ENCODE measurements at regions of chr1 and their contacts with region 1.

Region 1: GRCh38 chr1:75053207-75053606 is 81.0 kb upstream of the LHX8 start:
- DNase-seq: no peak
- ATAC-seq: peak; percentile 95
- H3K4me3 Mint-ChIP-seq: no peak overlapping the region
- H3K27ac Mint-ChIP-seq: no peak overlapping the region
- H3K4me1 Mint-ChIP-seq: no peaks in the 10 kb centered on the region
- H3K27me3 Mint-ChIP-seq: no peaks in the 10 kb centered on the region
- CTCF ChIP-seq: 0 out of 2 replicates have a peak, but pooled peaks have one; percentile 15

Region 2: GRCh38 chr1:75115654-75116053 is 62.4 kb after region 1 on chr1:
- CTCF ChIA-PET with region 1: no interaction called
- POLR2A ChIA-PET with region 1: no interaction called
- DNase-seq: no peak
- ATAC-seq: no peak
- H3K4me3 Mint-ChIP-seq: no peak overlapping the region
- H3K27ac Mint-ChIP-seq: no peak overlapping the region
- H3K4me1 Mint-ChIP-seq: peaks cover 9% of the 10 kb centered on the region
- H3K27me3 Mint-ChIP-seq: peaks cover 2% of the 10 kb centered on the region; the same call in 1 of the 2 replicates
- CTCF ChIP-seq: no peak

Region 3: GRCh38 chr1:75203415-75204277 is 150.4 kb after region 1 on chr1:
- CTCF ChIA-PET with region 1: interaction called, 25 read pairs
- POLR2A ChIA-PET with region 1: no interaction called
- DNase-seq: peak; percentile 14
- ATAC-seq: peak; percentile 89
- H3K4me3 Mint-ChIP-seq: no peak overlapping the region
- H3K27ac Mint-ChIP-seq: no peak overlapping the region
- H3K4me1 Mint-ChIP-seq: peaks cover 14% of the 10 kb centered on the region
- H3K27me3 Mint-ChIP-seq: no peaks in the 10 kb centered on the region
- CTCF ChIP-seq: peak; percentile 61; the same call in 1 of the 2 replicates